ENCODE measurements at regions of chr16 and their contacts with region 1.

Region 1: GRCh38 chr16:23803591-23804123 is 32.1 kb upstream of the PRKCB start:
- DNase-seq: peak; percentile 6 to 12
- H3K4me3 ChIP-seq: no peak overlapping the region
- H3K27ac ChIP-seq: no peak overlapping the region
- H3K4me1 ChIP-seq: no peaks in the 10 kb centered on the region
- H3K27me3 ChIP-seq: no peaks in the 10 kb centered on the region
- CTCF ChIP-seq: peak in 2 of 6 experiments; percentile 6 to 29
- POLR2A ChIP-seq: no peak

Region 2: DNA sequence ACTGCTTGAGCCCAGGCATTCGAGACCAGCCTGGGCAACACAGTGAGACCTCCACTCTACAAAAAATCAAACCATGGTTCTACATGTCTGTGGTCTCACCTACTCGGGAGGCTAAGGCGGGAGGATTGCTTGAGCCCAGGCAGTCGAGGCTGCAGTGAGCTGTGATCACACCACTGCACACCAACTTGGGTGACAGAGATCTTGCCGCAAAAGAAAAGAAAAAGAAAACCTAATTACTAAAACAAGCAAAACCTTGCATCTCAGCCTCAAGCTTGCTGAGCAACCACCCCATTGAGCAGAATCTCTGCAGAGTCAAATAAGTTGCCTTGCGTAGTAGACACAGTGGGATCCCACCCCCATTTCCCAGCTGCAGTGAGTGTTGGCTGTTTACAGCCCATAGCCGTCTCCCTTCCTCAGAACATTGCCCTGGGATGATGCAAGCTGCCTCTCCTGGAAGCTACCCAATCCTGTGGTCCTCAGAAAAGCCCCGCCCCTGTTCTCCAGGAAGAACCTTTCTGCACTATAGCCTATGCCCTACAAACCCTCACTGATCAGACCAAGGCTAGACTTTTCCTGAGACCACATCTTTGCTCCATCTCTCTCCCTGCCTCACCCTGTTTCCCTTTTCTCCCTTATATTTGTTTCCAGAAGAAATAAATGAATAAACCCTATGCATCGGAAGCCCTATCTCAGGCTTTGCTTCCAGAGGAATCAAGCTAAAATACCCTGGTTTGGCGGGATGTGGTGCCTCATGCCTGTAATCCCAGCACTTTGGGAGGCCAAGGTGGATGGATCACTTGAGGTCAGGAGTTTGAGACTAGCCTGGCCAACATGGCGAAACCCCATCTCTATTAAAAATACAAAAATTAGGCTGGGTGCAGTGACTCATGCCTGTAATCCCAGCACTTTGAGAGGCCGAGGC is 73.9 kb before region 1 on chr16:
- intact Hi-C with region 1: no loop called
- DNase-seq: no peak
- H3K4me3 ChIP-seq: no peak overlapping the region
- H3K27ac ChIP-seq: no peak overlapping the region
- H3K4me1 ChIP-seq: no peaks in the 10 kb centered on the region
- H3K27me3 ChIP-seq: no peaks in the 10 kb centered on the region
- CTCF ChIP-seq: no peak
- POLR2A ChIP-seq: no peak

Region 3: GRCh38 chr16:23896832-23897821 is 93.5 kb after region 1 on chr16:
- intact Hi-C with region 1: no loop called
- DNase-seq: no peak
- H3K4me3 ChIP-seq: no peak overlapping the region
- H3K27ac ChIP-seq: no peak overlapping the region
- H3K4me1 ChIP-seq: no peaks in the 10 kb centered on the region
- H3K27me3 ChIP-seq: no peaks in the 10 kb centered on the region
- CTCF ChIP-seq: no peak
- POLR2A ChIP-seq: no peak

Region 4: GRCh38 chr16:24005577-24005976 is 201.9 kb after region 1 on chr16:
- intact Hi-C with region 1: loop called (anchors 5 kb)
- DNase-seq: no peak
- H3K4me3 ChIP-seq: no peak overlapping the region
- H3K27ac ChIP-seq: no peak overlapping the region
- H3K4me1 ChIP-seq: no peaks in the 10 kb centered on the region
- H3K27me3 ChIP-seq: no peaks in the 10 kb centered on the region
- CTCF ChIP-seq: no peak
- POLR2A ChIP-seq: no peak

Region 5: GRCh38 chr16:24036614-24037013 is 233.0 kb after region 1 on chr16:
- intact Hi-C with region 1: loop called (anchors 10 kb)
- DNase-seq: peak in 1 of 2 donors; percentile 2
- H3K4me3 ChIP-seq: no peak overlapping the region
- H3K27ac ChIP-seq: no peak overlapping the region
- H3K4me1 ChIP-seq: no peaks in the 10 kb centered on the region
- H3K27me3 ChIP-seq: no peaks in the 10 kb centered on the region
- CTCF ChIP-seq: peak in 4 of 6 experiments; percentile 42 to 50 (median 47)
- POLR2A ChIP-seq: no peak

Region 6: GRCh38 chr16:24139282-24139681 is 335.6 kb after region 1 on chr16:
- intact Hi-C with region 1: no loop called
- DNase-seq: no peak
- H3K4me3 ChIP-seq: no peak overlapping the region
- H3K27ac ChIP-seq: no peak overlapping the region
- H3K4me1 ChIP-seq: no peaks in the 10 kb centered on the region
- H3K27me3 ChIP-seq: no peaks in the 10 kb centered on the region
- CTCF ChIP-seq: no peak
- POLR2A ChIP-seq: no peak